ENCODE measurements at regions of chr3 and their contacts with region 1.

Region 1: GRCh38 chr3:160565442-160566403 is at the start of gene KPNA4:
- DNase-seq: peak; percentile 98
- ATAC-seq: peak; percentile 89 to 92
- H3K4me3 ChIP-seq: peak within 1 kb of the TSS; percentile 84 to 99 (median 94)
- H3K27ac ChIP-seq: peak within 1 kb of the TSS; percentile 97 to 100 (median 98)
- H3K4me1 ChIP-seq: peaks cover 52 to 56% of the 10 kb centered on the region in 2 donors
- H3K27me3 ChIP-seq: no peaks in the 10 kb centered on the region
- CTCF ChIP-seq: no peak
- POLR2A ChIP-seq: peak; percentile 81 to 92
- total RNA-seq, gene KPNA4: 78.9 to 126 (median 86.0) TPM

Region 2: GRCh38 chr3:159828542-159828943 is 737.2 kb before region 1 on chr3:
- in situ Hi-C with region 1: no loop called
- intact Hi-C with region 1: loop called (anchors 10 kb)
- DNase-seq: no peak
- ATAC-seq: peak; percentile 61 to 66
- H3K4me3 ChIP-seq: peak overlapping the region; percentile 17 to 51 (median 24)
- H3K27ac ChIP-seq: peak overlapping the region; percentile 80 to 84 (median 82)
- H3K4me1 ChIP-seq: peaks cover 34 to 48% of the 10 kb centered on the region in 2 donors
- H3K27me3 ChIP-seq: no peaks in the 10 kb centered on the region
- CTCF ChIP-seq: peak; percentile 58 to 65 (median 63)
- POLR2A ChIP-seq: no peak

Region 3: DNA sequence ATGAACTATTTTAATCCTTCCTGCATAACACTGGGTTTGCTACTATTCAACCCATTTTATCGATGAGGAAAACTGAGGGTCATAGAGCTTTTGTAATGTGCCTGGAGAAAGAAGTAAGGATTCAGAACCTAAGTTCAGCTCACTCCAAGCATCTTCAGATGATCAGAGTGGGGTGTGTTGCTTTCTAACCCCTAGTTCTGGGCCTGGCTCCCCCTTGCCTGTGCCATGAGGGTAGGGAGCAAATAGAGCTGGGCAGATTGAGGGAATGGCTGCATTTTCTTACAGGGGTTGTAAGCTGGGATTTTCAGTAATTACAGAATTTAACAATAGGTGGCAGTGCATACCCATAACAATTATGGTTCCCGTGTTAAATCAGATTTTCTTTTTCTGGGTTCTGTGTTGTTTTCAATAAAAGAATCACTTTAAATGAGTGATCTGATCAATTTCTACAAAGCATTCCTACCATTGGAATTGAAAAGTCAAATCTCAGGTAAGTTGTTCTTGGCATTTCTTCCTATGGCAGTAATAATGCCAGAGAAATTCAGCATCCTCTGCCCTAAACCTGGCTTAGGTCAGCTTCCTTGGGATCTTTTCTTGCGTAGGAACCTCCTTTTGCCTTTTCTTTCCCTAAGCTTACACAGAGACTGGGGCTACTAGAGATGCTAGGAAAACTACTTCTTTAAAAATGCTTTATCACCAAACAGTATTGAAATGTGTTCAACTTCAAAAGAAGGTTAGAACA is 680.9 kb before region 1 on chr3:
- in situ Hi-C with region 1: no loop called
- intact Hi-C with region 1: loop called (anchors 5 kb)
- DNase-seq: no peak
- ATAC-seq: no peak
- H3K4me3 ChIP-seq: no peak overlapping the region
- H3K27ac ChIP-seq: peak overlapping the region in 3 of 4 donors; percentile 39 to 92 (median 83)
- H3K4me1 ChIP-seq: peaks cover 60 to 68% of the 10 kb centered on the region in 2 donors
- H3K27me3 ChIP-seq: no peaks in the 10 kb centered on the region
- CTCF ChIP-seq: peak; percentile 24 to 57 (median 41)
- POLR2A ChIP-seq: no peak

Region 4: DNA sequence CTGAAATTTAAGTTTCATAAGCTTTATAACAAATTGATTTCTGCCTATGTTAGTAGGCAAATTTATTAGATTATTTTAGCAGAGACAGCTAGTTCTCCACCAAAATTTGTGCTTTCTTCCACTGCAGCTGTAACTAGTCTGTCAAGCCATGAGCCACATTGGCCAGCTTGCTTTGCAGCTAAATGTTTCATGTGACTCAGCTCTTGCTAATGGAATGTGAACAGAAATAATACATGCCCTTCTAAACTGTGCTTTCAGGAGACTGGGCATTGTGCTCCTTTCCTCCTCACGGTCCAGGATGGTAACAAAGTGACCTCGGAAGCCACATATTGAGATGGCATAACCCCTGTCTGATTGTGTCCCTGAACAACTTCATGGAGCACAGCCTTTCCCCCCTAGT is 51.0 kb after region 1 on chr3:
- in situ Hi-C with region 1: no loop called
- intact Hi-C with region 1: loop called (anchors 5 kb)
- DNase-seq: peak; percentile 14 to 43
- ATAC-seq: peak; percentile 97
- H3K4me3 ChIP-seq: no peak overlapping the region
- H3K27ac ChIP-seq: peak overlapping the region; percentile 61 to 80 (median 70)
- H3K4me1 ChIP-seq: peaks cover 9 to 30% of the 10 kb centered on the region in 2 donors
- H3K27me3 ChIP-seq: no peaks in the 10 kb centered on the region
- CTCF ChIP-seq: no peak
- POLR2A ChIP-seq: no peak

Region 5: GRCh38 chr3:160643994-160644393 is 78.3 kb after region 1 on chr3:
- in situ Hi-C with region 1: no loop called
- intact Hi-C with region 1: no loop called
- DNase-seq: no peak
- ATAC-seq: no peak
- H3K4me3 ChIP-seq: no peak overlapping the region
- H3K27ac ChIP-seq: no peak overlapping the region
- H3K4me1 ChIP-seq: peaks cover 0 to 4% of the 10 kb centered on the region in 2 donors
- H3K27me3 ChIP-seq: no peaks in the 10 kb centered on the region
- CTCF ChIP-seq: no peak
- POLR2A ChIP-seq: no peak

Region 6: DNA sequence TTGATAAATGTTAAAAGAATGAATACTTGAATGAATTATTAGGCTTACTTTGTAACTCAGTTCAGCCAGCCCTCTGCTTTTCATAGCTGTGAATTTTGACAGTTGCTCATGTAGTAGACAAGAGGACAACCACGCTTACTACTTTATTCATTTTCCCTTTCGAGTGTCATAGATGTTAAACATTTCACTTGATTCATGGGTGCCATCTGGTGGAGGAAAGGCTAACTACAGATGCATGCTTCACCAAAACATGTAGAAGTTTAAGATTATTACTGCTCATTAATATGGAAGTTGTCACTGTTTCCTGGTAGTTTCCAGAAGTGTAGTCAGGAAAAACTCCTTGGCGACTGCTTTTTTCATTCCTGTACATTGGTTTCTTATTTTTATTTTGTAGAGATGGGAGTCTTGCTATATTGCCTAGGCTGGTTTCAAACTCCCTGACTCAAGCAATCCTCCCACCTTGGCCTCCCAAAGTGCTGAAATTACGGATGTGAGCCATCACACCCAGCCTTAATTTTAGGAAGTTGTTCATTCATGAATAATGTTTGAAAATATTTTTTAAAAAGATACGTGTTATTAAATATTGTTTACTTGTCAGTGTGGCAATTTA is 376.3 kb after region 1 on chr3:
- in situ Hi-C with region 1: no loop called
- intact Hi-C with region 1: loop called (anchors 10 kb)
- DNase-seq: peak; percentile 35 to 53
- ATAC-seq: peak; percentile 85 to 90
- H3K4me3 ChIP-seq: no peak overlapping the region
- H3K27ac ChIP-seq: peak overlapping the region in 1 of 4 donors; percentile 15
- H3K4me1 ChIP-seq: peaks cover 4 to 7% of the 10 kb centered on the region in 2 donors
- H3K27me3 ChIP-seq: no peaks in the 10 kb centered on the region
- CTCF ChIP-seq: peak; percentile 84 to 91 (median 86)
- POLR2A ChIP-seq: no peak

Measured in gastrocnemius medialis (tissue), 4 donors.